PC-3 (cell line): ENCODE measurements at regions of chr4 and their contacts with region 1.

Region 1: DNA sequence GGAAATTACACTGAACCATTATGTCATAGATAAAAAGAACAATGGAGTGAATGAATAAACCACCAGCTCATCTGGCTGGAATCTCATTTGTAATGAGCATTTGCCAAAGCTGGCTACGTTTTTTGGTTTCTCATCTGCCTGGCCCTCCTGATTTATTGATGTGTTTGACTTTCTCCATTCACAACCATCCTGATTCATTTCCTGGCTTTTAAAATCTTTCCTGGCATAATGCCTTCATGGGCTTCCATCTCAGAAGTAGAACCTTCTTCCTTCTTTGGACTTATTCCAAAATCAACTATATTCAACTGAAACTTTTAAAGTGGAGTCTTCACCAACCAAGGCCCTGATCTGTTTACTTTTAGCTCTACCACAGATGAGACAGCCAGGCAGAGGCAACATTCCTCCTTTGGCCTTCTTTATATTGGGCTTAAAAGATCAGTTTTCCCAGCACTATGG is 36.0 kb upstream of the ARSJ start:
- DNase-seq: peak; percentile 97
- ATAC-seq: peak; percentile 89
- H3K4me3 ChIP-seq: no peak overlapping the region
- H3K27ac ChIP-seq: peak overlapping the region; percentile 92
- H3K4me1 ChIP-seq: peaks cover 46% of the 10 kb centered on the region
- H3K27me3 ChIP-seq: no peaks in the 10 kb centered on the region
- CTCF ChIP-seq: no peak

Region 2: DNA sequence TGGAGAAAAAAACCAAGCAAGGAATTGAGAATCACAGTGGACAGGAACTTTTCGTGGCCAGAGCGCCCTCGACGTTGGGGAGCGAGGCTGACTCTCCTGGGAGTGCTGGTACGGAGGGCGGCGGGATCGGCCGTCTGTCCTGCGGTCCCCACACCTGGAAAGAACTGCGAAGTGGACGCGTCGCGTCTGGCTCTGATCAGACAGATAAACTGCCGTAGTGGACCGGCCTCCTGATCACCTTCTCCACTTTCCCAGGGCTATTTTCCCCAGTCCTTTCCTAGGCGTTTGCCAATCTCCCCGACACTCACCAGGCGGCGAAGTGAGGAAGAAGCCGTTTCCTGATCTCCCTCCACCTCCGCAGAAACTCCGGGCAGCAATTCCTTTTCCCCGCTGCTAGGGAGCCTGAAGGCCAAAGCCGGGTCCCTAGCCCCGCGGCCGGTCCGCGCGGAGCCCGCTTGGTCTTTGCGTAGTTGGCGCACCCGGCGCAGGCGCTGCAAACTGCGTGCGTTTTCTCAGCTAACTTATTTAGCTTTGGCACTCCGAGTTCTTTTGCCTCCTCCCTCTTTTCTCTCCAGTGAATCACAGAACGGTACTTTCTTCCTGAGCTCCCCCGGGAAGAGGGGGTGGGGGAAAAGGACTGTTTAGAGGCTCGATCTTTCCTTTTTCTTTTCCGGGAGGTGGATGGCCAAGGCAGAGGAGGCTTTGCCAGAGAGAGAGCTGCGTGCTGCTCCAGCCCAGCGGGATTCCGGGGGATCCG is 36.1 kb before region 1 on chr4 and contains the start of gene ARSJ:
- CTCF ChIA-PET with region 1: no interaction called
- POLR2A ChIA-PET with region 1: no interaction called
- intact Hi-C with region 1: loop called (anchors 5 kb)
- DNase-seq: peak; percentile 64
- ATAC-seq: peak; percentile 48
- H3K4me3 ChIP-seq: peak within 1 kb of the TSS; percentile 74
- H3K27ac ChIP-seq: peak within 1 kb of the TSS; percentile 73
- H3K4me1 ChIP-seq: peaks cover 19% of the 10 kb centered on the region
- H3K27me3 ChIP-seq: no peaks in the 10 kb centered on the region
- CTCF ChIP-seq: no peak
- total RNA-seq, gene ARSJ: 16.4 and 19.1 TPM in 2 replicates

Region 3: GRCh38 chr4:114077610-114078009 is 62.1 kb after region 1 on chr4:
- CTCF ChIA-PET with region 1: interaction called, 3 read pairs
- POLR2A ChIA-PET with region 1: interaction called, 3 read pairs
- intact Hi-C with region 1: loop called (anchors 10 kb)
- DNase-seq: peak; percentile 77
- ATAC-seq: peak; percentile 92
- H3K4me3 ChIP-seq: 0 out of 2 replicates have a peak overlapping the region, but pooled peaks have one; percentile 7
- H3K27ac ChIP-seq: peak overlapping the region; percentile 94
- H3K4me1 ChIP-seq: peaks cover 16% of the 10 kb centered on the region
- H3K27me3 ChIP-seq: no peaks in the 10 kb centered on the region
- CTCF ChIP-seq: no peak

Region 4: DNA sequence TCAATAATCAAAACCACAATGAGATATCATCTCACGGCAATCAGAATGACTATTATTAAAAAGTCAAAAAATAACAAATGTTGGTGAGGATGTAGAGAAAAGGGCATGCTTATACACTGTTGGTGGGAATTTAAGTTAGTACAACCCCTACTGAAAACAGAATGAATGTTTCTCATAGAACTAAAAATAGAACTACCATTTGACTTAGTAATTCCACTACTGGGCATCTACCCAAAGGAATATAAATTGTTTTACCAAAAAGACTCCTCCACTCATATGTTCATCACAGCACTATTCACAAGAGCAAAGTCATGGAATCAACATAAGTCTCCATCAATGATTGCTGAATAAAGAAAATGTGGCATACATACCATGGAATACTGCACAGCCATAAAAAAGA is 242.0 kb after region 1 on chr4:
- CTCF ChIA-PET with region 1: no interaction called
- POLR2A ChIA-PET with region 1: no interaction called
- intact Hi-C with region 1: loop called (anchors 5 kb)
- DNase-seq: peak; percentile 6
- ATAC-seq: peak; percentile 38; the same call in 1 of the 2 replicates
- H3K4me3 ChIP-seq: no peak overlapping the region
- H3K27ac ChIP-seq: peak overlapping the region; percentile 34
- H3K4me1 ChIP-seq: 0 out of 2 replicates have a peak, but pooled peaks cover 4% of the 10 kb centered on the region
- H3K27me3 ChIP-seq: no peaks in the 10 kb centered on the region
- CTCF ChIP-seq: no peak